ENCODE measurements at regions of chr9 and their contacts with region 1.

Region 1: DNA sequence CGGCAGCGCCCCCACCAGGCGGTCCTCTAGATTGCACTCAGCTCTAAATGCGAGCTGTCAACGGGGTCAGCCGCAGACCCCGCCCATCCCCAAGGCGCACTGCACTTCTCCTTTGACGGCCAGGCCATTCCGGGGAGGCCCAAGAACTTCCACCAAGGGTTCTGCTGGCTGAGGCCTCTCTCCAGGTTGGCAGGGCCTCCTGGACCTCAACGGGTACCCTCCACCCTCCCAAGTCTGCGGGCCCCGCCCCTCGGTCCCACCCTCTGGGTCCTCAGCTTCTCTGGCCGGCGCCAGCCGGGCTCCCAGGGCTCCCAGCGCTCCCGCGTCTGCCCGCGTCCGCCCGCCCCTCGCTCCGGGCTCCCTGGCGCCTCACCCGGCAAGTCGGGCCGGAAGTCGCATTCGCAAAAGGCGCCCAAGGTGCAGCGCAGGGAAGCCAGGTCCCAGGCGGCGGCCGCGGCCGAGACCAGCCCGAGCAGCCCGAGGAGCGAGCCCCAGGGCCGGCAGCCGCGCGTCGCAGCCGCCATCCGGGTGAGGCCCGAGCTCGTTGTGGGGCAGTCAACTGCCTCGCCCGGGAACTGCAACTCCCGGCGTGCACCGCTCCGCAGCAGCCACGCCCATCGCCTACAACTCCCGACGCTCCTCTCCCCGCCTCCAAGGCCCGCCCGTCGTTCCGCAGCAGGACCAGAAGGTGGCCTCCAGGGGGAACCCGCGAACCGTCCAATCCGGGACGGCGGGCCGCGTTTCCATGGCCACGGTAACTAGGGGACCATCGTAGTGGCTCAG is at the start of gene TOR2A:
- DNase-seq: peak; percentile 99
- ATAC-seq: peak; percentile 92
- H3K4me3 Mint-ChIP-seq: peak within 1 kb of the TSS; percentile 77
- H3K27ac Mint-ChIP-seq: peak within 1 kb of the TSS; percentile 86
- H3K4me1 Mint-ChIP-seq: peaks cover 15% of the 10 kb centered on the region
- H3K27me3 Mint-ChIP-seq: no peaks in the 10 kb centered on the region
- CTCF ChIP-seq: peak; percentile 76
- total RNA-seq, gene TOR2A: 14.4 to 16.1 TPM

Region 2: GRCh38 chr9:127450830-127451724 is 283.9 kb before region 1 on chr9 and contains the starts of genes LRSAM1 and RPL12:
- CTCF ChIA-PET with region 1: interaction called, 3 read pairs
- POLR2A ChIA-PET with region 1: interaction called, 10 read pairs
- intact Hi-C with region 1: no loop called
- DNase-seq: peak; percentile 97
- ATAC-seq: peak; percentile 71
- H3K4me3 Mint-ChIP-seq: peak within 1 kb of the TSS; percentile 91
- H3K27ac Mint-ChIP-seq: peak within 1 kb of the TSS; percentile 94
- H3K4me1 Mint-ChIP-seq: peaks cover 38% of the 10 kb centered on the region
- H3K27me3 Mint-ChIP-seq: no peaks in the 10 kb centered on the region
- CTCF ChIP-seq: no peak
- total RNA-seq, gene LRSAM1: 17.1 to 18.6 TPM
- total RNA-seq, gene RPL12: 2,353 to 2,364 TPM

Region 3: DNA sequence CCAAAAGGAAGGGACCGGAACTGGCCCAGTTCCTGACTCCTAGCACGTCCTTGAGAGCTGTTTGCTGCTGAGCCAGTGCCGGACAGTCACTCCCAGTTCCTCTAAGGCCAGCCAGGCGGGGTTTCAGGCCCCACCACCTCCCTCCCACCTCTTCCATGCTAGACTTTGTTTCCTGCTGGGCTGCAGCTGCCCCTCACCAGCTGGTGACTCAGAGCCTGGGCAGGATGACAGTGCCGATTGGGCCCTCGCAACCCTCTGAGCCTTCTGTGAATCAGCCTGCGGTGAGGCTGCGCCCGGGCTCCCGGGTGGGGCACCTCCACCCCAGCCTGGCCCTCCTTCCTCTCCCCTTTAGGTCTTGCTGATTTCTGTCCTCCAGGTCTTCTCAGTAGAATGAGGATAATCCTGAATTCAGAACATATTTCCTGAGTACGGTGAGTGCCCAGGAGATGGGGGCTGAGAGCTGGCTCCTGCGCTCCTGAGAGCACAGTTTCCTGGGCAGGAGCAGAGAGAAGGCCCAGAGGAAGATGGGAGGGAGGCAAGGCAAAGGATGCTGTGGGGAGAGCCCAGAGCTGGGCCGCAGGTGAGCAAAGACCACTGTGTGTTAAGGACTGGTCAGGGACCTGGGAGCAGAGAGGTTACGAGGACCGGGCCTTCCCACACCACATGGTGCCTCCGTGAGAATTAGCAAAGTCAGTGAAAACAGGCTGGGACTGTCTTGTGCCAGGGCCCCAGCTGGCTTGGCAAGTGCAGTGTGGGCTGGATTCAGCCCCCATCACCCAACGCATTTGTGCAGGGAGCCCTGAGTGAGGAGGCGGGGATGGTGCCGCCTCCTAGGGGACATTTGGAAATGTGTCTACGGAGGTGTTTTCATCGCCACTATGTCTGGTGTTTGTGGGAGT is 155.7 kb before region 1 on chr9:
- CTCF ChIA-PET with region 1: interaction called, 62 read pairs
- POLR2A ChIA-PET with region 1: no interaction called
- intact Hi-C with region 1: no loop called
- DNase-seq: peak; percentile 92
- ATAC-seq: peak; percentile 98
- H3K4me3 Mint-ChIP-seq: peak overlapping the region; percentile 66
- H3K27ac Mint-ChIP-seq: peak overlapping the region; percentile 82
- H3K4me1 Mint-ChIP-seq: peaks cover 34% of the 10 kb centered on the region
- H3K27me3 Mint-ChIP-seq: peaks cover 2% of the 10 kb centered on the region
- CTCF ChIP-seq: no peak

Region 4: DNA sequence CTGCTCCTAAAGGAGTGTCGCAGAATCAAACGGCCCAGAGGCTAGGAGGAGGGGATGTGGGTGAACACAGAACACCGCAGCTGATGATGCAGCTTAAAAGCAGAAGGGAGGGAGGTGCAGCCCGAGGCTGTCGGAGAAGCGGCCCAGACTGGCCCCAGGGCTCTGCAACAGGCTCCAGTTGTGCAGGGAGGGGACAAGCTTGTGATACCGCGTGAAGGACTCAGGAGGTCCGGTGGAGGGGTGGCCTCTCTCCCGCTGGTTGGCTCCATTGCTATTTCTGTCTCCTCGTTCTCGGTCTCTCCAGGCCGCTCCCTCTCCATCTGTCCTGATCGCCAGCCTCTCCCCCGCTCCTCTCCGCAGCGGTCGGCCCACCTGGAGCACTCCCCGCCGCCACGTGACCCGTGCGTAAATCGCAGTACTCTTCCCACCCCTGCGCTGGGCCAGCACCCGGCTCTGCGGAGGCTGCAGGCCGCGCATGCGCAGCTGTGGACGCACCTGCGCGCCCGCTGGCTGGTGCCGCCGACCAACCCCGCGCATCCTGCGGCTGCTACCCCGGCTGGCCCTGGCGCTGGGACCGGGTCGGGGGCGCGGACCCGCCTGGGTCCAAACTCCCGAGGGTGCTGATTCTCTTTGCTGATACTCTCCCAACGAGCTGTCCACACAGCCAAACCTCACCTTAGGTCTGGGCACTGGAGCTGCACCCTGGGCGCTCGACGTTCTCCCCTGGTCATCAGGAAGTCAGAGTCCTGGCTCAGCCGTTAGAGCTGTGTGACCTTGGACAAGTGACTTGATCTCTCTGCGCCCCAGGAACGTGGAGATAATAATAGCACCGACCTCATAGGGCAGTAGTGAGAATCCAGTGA is 126.6 kb before region 1 on chr9:
- CTCF ChIA-PET with region 1: interaction called, 15 read pairs
- POLR2A ChIA-PET with region 1: interaction called, 4 read pairs
- intact Hi-C with region 1: no loop called
- DNase-seq: peak; percentile 76
- ATAC-seq: peak; percentile 60
- H3K4me3 Mint-ChIP-seq: peak overlapping the region; percentile 77
- H3K27ac Mint-ChIP-seq: peak overlapping the region; percentile 38
- H3K4me1 Mint-ChIP-seq: peaks cover 24% of the 10 kb centered on the region
- H3K27me3 Mint-ChIP-seq: peaks cover 15% of the 10 kb centered on the region
- CTCF ChIP-seq: no peak

Region 5: DNA sequence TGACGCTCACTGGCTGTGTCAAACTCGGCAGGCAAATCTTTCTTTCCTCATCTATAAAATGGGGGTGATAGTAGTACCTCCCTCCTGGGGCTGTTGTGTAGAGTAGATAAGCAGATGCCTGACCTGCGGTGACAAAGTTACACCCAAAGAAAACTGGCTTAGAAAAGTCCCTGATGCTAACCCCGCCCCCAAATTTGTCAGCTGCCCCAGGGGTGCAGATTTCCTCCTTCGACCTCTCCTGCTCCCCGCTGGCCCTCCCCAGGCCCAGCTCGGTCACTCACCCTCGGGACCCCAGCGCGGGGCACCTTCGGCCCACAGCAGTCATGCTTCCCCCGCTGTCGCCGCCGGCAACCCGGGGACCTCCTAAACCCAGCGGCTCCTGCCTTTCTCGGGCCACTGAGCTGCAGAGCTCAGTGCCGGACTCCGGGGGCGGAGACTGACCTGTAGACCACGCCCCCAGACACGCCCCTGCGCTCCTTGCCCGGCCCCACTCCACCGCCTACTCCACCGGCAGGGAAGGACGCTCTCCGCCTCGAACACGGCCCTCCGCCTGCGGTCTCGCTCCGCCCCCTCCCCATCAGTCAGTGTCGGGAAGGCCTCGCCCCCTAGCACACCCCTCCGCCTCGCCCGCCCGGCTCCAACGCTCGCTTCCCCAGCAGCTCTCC is 36.1 kb after region 1 on chr9:
- CTCF ChIA-PET with region 1: interaction called, 40 read pairs
- POLR2A ChIA-PET with region 1: interaction called, 8 read pairs
- intact Hi-C with region 1: no loop called
- DNase-seq: peak; percentile 99
- ATAC-seq: peak; percentile 93
- H3K4me3 Mint-ChIP-seq: peak overlapping the region; percentile 83
- H3K27ac Mint-ChIP-seq: peak overlapping the region; percentile 87
- H3K4me1 Mint-ChIP-seq: peaks cover 62% of the 10 kb centered on the region
- H3K27me3 Mint-ChIP-seq: no peaks in the 10 kb centered on the region
- CTCF ChIP-seq: no peak

Region 6: DNA sequence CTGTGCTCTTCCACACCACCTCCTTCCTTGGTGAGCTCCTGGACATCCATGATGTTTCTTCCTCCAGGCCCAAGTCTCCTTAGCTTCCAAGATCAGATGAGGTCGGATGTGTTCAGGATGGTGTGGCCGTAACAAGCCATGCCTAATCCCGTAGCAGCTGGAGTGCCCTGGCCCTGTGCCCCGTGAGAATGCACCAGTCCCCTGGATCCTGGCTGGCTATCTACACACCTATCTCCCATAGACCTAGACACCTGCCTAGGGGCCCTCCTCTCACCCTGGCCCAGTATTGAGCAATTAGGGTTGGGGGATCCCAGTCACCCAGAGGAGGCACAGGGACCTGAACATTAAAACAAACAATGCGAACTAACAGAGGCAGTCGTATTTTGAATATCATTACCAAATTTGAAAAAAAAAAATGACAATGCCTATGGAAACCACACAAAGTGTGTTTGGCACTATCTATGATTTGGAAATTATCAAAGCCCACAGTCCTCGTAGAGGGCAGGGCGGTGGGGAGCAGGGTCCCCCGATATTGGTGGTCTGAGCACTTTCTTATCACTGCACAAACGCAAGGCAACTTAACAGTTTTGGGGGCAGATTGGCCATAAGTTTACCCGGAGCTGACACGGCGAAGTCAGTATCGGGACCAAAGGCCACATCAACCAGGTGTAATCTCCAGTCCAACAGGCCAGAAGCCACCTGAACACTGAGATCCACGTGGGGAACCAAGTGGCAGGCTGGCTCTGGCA is 106.3 kb after region 1 on chr9:
- CTCF ChIA-PET with region 1: no interaction called
- POLR2A ChIA-PET with region 1: no interaction called
- intact Hi-C with region 1: no loop called
- DNase-seq: no peak
- ATAC-seq: no peak
- H3K4me3 Mint-ChIP-seq: no peak overlapping the region
- H3K27ac Mint-ChIP-seq: no peak overlapping the region
- H3K4me1 Mint-ChIP-seq: no peaks in the 10 kb centered on the region
- H3K27me3 Mint-ChIP-seq: no peaks in the 10 kb centered on the region
- CTCF ChIP-seq: no peak

Region 7: DNA sequence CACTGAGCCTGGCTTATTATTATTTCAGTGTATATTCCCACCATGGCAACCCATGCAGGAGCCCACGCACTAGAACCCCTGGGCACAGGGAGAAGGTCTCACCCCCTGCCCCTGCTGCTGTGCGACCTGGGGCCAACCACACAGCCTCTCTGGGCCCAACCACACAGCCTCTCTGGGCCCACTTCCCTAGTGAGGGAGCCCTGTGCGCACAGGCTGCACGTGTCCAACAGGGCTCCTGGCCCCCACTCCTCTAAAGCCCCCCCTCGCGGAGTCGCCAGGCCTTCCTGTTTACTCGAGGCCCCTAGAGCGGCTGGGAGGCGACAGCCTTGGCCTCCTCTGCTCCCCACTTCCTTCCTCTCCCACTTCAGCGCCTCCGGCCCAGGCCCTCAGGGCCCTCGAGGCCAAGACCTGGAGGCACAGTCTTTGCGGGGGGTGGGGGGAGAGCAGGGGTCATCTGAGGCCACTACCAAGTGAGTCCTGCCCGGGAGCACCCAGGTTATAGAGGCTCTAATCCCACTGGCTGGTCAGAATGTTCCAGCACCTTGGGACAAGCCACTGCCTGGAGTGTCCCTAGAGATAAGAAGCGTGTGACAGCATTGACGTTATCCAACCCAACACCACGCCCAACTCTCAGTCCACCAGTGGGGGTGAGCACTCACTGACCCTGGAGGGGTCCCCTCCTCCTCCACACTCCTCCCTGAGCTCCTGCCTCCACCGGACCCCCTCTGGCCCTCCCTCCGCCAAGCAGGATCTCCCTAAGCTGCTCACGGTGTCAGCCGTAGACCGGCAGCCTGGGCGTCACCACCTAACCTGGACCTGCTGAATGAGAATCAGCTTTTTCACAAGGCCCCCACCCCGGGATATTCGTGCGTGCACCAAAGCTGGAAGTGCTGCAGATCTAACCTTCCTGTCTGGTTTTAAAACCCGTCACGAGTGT is 127.4 kb after region 1 on chr9:
- CTCF ChIA-PET with region 1: interaction called, 13 read pairs
- POLR2A ChIA-PET with region 1: no interaction called
- intact Hi-C with region 1: loop called (anchors 5 kb)
- DNase-seq: peak; percentile 64
- ATAC-seq: peak; percentile 53
- H3K4me3 Mint-ChIP-seq: no peak overlapping the region
- H3K27ac Mint-ChIP-seq: peak overlapping the region; percentile 86
- H3K4me1 Mint-ChIP-seq: peaks cover 36% of the 10 kb centered on the region
- H3K27me3 Mint-ChIP-seq: no peaks in the 10 kb centered on the region
- CTCF ChIP-seq: no peak

Measured in activated CD8-positive, alpha-beta T cell treated with anti-CD3 and anti-CD28 coated beads for 36 hours (primary cell).